Esophagus muscularis mucosa (tissue), 4 donors: ENCODE measurements at regions of chr9 and their contacts with region 1.

Region 1: DNA sequence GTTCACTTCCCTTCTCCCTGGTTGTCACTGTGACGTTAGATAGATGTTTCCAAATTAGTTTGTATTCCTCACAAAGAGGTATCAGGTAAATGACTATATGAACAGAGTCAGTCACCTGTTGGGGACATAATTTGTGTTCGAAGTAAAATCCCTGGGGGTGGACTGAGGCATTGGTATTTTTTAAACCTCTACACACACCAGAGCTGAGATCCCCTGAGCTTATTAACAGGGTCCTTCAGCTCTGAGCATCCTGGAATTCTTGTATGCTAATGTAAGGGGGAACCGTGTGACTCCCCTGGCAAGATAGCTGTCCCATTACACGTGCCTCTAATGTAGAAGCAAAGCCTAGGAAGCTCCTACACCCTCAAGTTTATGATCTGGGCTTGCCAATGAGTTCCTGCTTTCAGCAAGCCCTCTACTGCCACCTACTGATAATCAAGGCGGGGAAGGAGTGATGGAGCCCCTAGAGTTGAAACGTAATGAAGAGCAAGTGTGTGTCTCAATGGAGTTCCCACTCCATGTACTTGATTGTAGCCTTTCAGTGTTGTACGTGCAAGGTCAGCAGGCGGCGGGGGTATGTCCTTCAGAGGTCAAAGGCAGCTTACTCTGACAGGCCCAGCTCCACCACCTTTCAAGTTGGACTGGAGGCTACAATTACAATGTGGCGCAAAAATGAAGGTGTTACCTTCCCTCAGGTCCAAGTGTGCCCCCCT is 14.4 kb downstream of the PRKACG start:
- DNase-seq: no peak
- H3K4me3 ChIP-seq: no peak overlapping the region
- H3K27ac ChIP-seq: no peak overlapping the region
- H3K4me1 ChIP-seq: peaks cover 0 to 16% (median 2%) of the 10 kb centered on the region in 4 donors
- H3K27me3 ChIP-seq: no peaks in the 10 kb centered on the region
- CTCF ChIP-seq: peak; percentile 63 to 77 (median 68)
- EP300 ChIP-seq: no peak
- POLR2A ChIP-seq: no peak

Region 2: GRCh38 chr9:68584189-68585033 is 415.1 kb before region 1 on chr9:
- intact Hi-C with region 1: loop called (anchors 5 kb)
- DNase-seq: no peak
- H3K4me3 ChIP-seq: peak overlapping the region in 1 of 4 donors; percentile 6
- H3K27ac ChIP-seq: peak overlapping the region in 2 of 4 donors; percentile 3 to 31
- H3K4me1 ChIP-seq: peaks cover 0 to 7% (median 3%) of the 10 kb centered on the region in 4 donors
- H3K27me3 ChIP-seq: no peaks in the 10 kb centered on the region
- CTCF ChIP-seq: peak; percentile 98
- EP300 ChIP-seq: no peak
- POLR2A ChIP-seq: no peak

Region 3: GRCh38 chr9:68704814-68705530 is 294.6 kb before region 1 on chr9 and contains the start of gene PIP5K1B:
- intact Hi-C with region 1: loop called (anchors 10 kb)
- DNase-seq: peak; percentile 74
- H3K4me3 ChIP-seq: peak within 1 kb of the TSS; percentile 66 to 83 (median 69)
- H3K27ac ChIP-seq: peak within 1 kb of the TSS; percentile 38 to 70 (median 56)
- H3K4me1 ChIP-seq: peaks cover 0 to 30% (median 26%) of the 10 kb centered on the region in 4 donors
- H3K27me3 ChIP-seq: peaks cover 0 to 44% (median 9%) of the 10 kb centered on the region in 4 donors
- CTCF ChIP-seq: no peak
- EP300 ChIP-seq: no peak
- POLR2A ChIP-seq: no peak
- total RNA-seq, gene PIP5K1B: 0.42 to 1.7 (median 1.2) TPM

Region 4: GRCh38 chr9:69097064-69097463 is 97.5 kb after region 1 on chr9:
- intact Hi-C with region 1: no loop called
- DNase-seq: no peak
- H3K4me3 ChIP-seq: no peak overlapping the region
- H3K27ac ChIP-seq: no peak overlapping the region
- H3K4me1 ChIP-seq: peaks cover 0 to 6% (median 5%) of the 10 kb centered on the region in 4 donors
- H3K27me3 ChIP-seq: no peaks in the 10 kb centered on the region
- CTCF ChIP-seq: no peak
- EP300 ChIP-seq: no peak
- POLR2A ChIP-seq: no peak